ENCODE measurements at regions of chr3 and their contacts with region 1.

Region 1: DNA sequence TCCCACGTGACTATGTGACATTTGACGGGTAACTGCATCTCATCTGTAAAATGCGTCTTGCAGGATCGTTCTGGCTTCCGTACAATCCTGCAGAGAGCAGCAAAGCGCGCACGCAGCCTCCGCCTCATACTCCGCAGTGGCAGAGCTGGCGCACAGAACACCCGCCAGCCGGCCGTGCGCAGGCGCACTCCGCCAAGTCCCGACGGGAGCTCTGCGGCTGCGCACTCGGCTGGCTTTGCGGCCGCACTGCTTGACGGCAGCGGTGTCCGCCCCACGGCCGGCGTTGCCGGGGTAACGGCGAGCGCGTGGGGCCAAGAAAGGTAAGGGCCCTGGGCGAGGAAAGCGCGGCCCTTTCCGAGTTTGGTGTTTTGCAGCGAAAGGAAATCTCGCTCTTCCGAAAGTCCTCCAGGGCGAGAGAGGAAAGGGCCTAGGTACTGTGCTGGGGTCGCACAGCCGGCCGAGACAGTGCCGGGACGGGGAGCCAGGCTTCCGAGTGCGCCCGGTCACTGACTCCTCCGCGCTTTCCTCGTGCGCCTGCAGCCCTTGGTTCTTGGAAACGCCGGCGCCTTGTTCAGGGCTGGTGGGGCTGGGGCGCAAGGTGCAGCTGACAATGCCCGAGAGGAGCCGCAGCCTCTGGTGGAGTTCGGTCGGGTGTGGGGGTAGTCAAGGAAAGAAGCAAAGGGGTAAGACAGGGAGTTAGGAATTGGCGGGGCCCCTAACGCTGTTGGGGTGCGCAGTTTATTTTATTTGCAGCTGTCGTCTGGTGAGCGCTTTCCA is at the start of gene TSEN2:
- DNase-seq: peak; percentile 92 to 98 (median 95)
- ATAC-seq: peak; percentile 88 to 96 (median 95)
- H3K4me3 ChIP-seq: peak within 1 kb of the TSS; percentile 58 to 94 (median 78)
- H3K27ac ChIP-seq: peak within 1 kb of the TSS; percentile 44 to 86 (median 82)
- H3K4me1 ChIP-seq: peaks cover 0 to 41% (median 19%) of the 10 kb centered on the region in 12 donors
- H3K27me3 ChIP-seq: no peaks in the 10 kb centered on the region
- CTCF ChIP-seq: peak in 6 of 12 donors; percentile 10 to 43 (median 35)
- POLR2A ChIP-seq: peak in 1 of 2 donors; percentile 94
- total RNA-seq, gene TSEN2: 14.3 to 21.6 (median 18.4) TPM

Region 2: GRCh38 chr3:11835028-11835639 is 649.3 kb before region 1 on chr3:
- intact Hi-C with region 1: no loop called
- DNase-seq: no peak
- ATAC-seq: no peak
- H3K4me3 ChIP-seq: no peak overlapping the region
- H3K27ac ChIP-seq: no peak overlapping the region
- H3K4me1 ChIP-seq: peaks cover 0 to 11% (median under 1%) of the 10 kb centered on the region in 12 donors
- H3K27me3 ChIP-seq: no peaks in the 10 kb centered on the region
- CTCF ChIP-seq: peak in 8 of 12 donors; percentile 23 to 50 (median 35)
- POLR2A ChIP-seq: no peak

Region 3: GRCh38 chr3:12107071-12107713 is 377.2 kb before region 1 on chr3:
- intact Hi-C with region 1: no loop called
- DNase-seq: no peak
- ATAC-seq: no peak
- H3K4me3 ChIP-seq: no peak overlapping the region
- H3K27ac ChIP-seq: no peak overlapping the region
- H3K4me1 ChIP-seq: no peaks in the 10 kb centered on the region
- H3K27me3 ChIP-seq: peaks cover 0 to 5% (median 0%) of the 10 kb centered on the region in 9 donors
- CTCF ChIP-seq: no peak
- POLR2A ChIP-seq: no peak

Region 4: GRCh38 chr3:12175844-12176453 is 308.4 kb before region 1 on chr3:
- intact Hi-C with region 1: loop called (anchors 2 to 5 kb)
- DNase-seq: peak; percentile 56 to 74 (median 70)
- ATAC-seq: peak; percentile 82 to 90 (median 84)
- H3K4me3 ChIP-seq: no peak overlapping the region
- H3K27ac ChIP-seq: no peak overlapping the region
- H3K4me1 ChIP-seq: peaks cover 9 to 55% (median 29%) of the 10 kb centered on the region in 12 donors
- H3K27me3 ChIP-seq: no peaks in the 10 kb centered on the region
- CTCF ChIP-seq: peak; percentile 77 to 93 (median 88)
- POLR2A ChIP-seq: no peak

Region 5: GRCh38 chr3:12370758-12371157 is 113.6 kb before region 1 on chr3:
- intact Hi-C with region 1: loop called in 1 of 10 experiments (anchors 5 kb)
- DNase-seq: peak in 1 of 5 donors; percentile 24
- ATAC-seq: peak; percentile 67 to 93 (median 80)
- H3K4me3 ChIP-seq: no peak overlapping the region
- H3K27ac ChIP-seq: peak overlapping the region in 9 of 12 donors; percentile 2 to 68 (median 55)
- H3K4me1 ChIP-seq: peaks cover 0 to 43% (median 17%) of the 10 kb centered on the region in 12 donors
- H3K27me3 ChIP-seq: no peaks in the 10 kb centered on the region
- CTCF ChIP-seq: peak in 11 of 12 donors; percentile 16 to 52 (median 34)
- POLR2A ChIP-seq: no peak

Region 6: GRCh38 chr3:12440927-12441326 is 43.5 kb before region 1 on chr3:
- intact Hi-C with region 1: loop called in 1 of 10 experiments (anchors 5 kb)
- DNase-seq: peak; percentile 62 to 87 (median 83)
- ATAC-seq: peak; percentile 56 to 85 (median 75)
- H3K4me3 ChIP-seq: no peak overlapping the region
- H3K27ac ChIP-seq: peak overlapping the region in 10 of 12 donors; percentile 23 to 77 (median 68)
- H3K4me1 ChIP-seq: peaks cover 0 to 60% (median 29%) of the 10 kb centered on the region in 12 donors
- H3K27me3 ChIP-seq: no peaks in the 10 kb centered on the region
- CTCF ChIP-seq: no peak
- POLR2A ChIP-seq: no peak

Region 7: DNA sequence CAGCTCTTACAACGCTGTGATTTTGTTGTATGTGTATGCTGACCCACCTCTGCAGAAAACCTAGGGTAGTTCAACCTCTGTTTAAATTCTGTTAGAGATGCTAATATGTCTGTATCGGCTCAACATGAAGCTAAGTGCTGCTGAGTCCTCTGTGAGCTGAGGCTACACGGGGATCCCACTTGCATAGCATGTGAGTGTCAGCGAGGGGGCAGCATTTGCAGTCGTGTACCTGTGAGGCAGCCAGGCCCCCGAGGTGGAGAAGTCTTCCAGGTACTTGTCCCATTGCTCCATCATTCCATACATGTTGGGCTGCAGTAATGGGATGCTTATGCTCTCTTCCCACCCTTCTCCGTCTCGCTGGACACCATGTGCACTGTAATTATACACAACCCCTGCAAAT is 57.2 kb after region 1 on chr3:
- intact Hi-C with region 1: no loop called
- DNase-seq: peak in 2 of 5 donors; percentile 46 to 68
- ATAC-seq: peak in 2 of 4 donors; percentile 41 to 61
- H3K4me3 ChIP-seq: no peak overlapping the region
- H3K27ac ChIP-seq: no peak overlapping the region
- H3K4me1 ChIP-seq: no peaks in the 10 kb centered on the region
- H3K27me3 ChIP-seq: no peaks in the 10 kb centered on the region
- CTCF ChIP-seq: peak in 8 of 12 donors; percentile 21 to 42 (median 30)
- POLR2A ChIP-seq: no peak